SK-N-SH (cell line): ENCODE measurements at regions of chr22 and their contacts with region 1.

Region 1: GRCh38 chr22:33202455-33202854 is 144.3 kb upstream of the SYN3 start:
- DNase-seq: no peak
- H3K4me3 ChIP-seq: no peak overlapping the region
- H3K27ac ChIP-seq: no peak overlapping the region
- H3K4me1 ChIP-seq: no peaks in the 10 kb centered on the region; a peak in 1 of 4 replicates
- H3K27me3 ChIP-seq: no peaks in the 10 kb centered on the region
- CTCF ChIP-seq: no peak
- EP300 ChIP-seq: no peak
- RAD21 ChIP-seq: no peak

Region 2: DNA sequence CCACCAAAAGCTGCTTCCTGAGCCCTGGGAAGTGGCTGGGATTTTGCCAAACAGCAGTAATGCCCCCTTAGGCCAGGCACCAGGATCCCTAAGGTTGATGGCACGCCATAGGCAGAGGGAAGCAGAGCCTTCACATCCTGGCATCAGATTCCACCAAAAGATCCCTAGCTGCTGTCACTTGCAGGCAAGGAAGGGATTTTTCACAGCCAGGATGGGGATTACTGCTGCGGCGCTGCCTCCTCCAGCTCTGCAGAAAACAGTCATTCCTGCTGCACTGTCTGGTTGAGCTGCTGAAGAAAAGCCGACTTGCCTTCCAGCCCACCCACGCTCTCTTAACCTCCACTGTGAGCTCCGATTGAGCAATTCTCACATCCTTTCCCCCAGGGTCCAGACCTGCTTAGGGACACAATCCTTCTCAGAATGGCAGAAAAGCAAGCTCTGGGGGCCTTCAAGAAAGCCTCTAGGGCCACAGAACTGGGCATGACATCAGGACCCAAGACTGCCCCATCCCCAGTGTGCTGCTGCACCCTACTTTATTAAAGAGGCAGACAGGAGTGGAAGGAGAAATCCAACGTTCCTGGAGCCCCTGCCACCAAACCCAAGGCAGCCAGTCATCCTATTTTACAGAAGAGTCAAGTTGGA is 164.2 kb before region 1 on chr22:
- CTCF ChIA-PET with region 1: interaction called, 13 read pairs
- POLR2A ChIA-PET with region 1: no interaction called
- DNase-seq: peak; percentile 56
- H3K4me3 ChIP-seq: no peak overlapping the region
- H3K27ac ChIP-seq: no peak overlapping the region
- H3K4me1 ChIP-seq: peaks cover 0 to 3% of the 10 kb centered on the region in 2 experiments; a peak in 1 of 4 replicates
- H3K27me3 ChIP-seq: no peaks in the 10 kb centered on the region; the same call in 1 of the 2 replicates
- CTCF ChIP-seq: no peak
- EP300 ChIP-seq: no peak
- RAD21 ChIP-seq: no peak

Region 3: DNA sequence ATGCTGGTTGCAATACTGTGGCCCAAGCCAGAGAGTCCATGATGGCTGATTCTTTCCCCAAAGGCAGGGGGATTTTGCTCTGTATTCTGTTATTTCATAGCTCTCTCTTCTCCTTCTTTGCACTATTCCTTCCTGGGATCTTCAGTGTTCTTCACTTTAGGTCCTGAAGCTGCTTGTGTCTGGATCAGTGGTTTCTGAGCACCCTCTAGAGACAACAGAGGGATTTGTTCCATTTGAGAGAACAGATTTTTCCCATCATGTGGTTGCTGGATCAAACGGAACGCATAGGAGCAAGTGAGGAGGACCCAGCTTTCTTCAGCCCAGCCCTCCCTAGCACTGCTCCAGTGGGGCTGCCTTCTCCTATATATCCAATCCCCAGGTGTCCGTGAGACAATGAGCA is 75.6 kb before region 1 on chr22:
- CTCF ChIA-PET with region 1: interaction called, 25 read pairs
- POLR2A ChIA-PET with region 1: no interaction called
- DNase-seq: peak; percentile 52
- H3K4me3 ChIP-seq: no peak overlapping the region
- H3K27ac ChIP-seq: no peak overlapping the region
- H3K4me1 ChIP-seq: no peaks in the 10 kb centered on the region
- H3K27me3 ChIP-seq: no peaks in the 10 kb centered on the region
- CTCF ChIP-seq: no peak
- EP300 ChIP-seq: no peak
- RAD21 ChIP-seq: peak; percentile 85